Right cardiac atrium (tissue), 5 donors: ENCODE measurements at regions of chr4 and their contacts with region 1.

Region 1: DNA sequence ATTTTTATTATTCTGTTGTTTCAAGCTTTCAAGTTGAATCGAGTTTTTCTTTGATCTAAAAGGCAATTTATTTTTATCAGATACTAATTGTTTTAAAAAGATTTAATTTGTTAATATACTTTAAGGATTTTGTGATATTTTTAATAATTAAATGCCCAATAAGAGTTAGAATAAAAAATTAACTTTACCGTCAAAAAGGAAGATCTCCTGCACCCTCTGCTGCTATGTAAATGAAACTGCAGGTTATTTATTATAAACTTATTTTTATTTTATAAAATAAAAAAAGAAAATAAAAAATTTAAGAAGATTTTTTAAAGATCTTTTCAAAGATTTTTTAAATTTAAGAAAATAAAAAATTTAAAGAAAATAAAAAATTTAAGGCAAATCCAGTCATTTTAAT is 166.1 kb downstream of the CCSER1 start:
- DNase-seq: no peak
- ATAC-seq: no peak
- H3K4me3 ChIP-seq: no peak overlapping the region
- H3K27ac ChIP-seq: no peak overlapping the region
- H3K4me1 ChIP-seq: no peaks in the 10 kb centered on the region
- H3K27me3 ChIP-seq: no peaks in the 10 kb centered on the region

Region 2: DNA sequence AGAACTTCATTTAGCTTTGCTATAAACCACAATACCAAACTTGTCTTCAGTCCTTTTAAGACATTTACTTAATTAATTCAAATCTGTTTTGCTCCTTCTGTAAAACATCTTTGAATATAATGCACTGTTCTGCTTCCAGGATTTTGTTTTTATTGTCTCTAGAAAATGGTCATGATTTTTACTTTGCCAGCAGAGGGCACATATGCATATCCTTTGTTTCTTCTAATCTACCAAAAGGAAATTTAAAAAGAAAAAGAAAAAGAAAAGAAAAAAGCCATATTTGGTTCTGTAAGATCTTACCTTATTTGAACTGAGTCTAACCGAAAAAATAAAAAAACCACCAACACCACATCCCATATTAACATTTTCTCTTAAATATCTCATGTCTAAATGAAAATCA is 268.1 kb before region 1 on chr4:
- intact Hi-C with region 1: loop called in 1 of 4 experiments (anchors 10 kb)
- DNase-seq: no peak
- ATAC-seq: no peak
- H3K4me3 ChIP-seq: no peak overlapping the region
- H3K27ac ChIP-seq: no peak overlapping the region
- H3K4me1 ChIP-seq: no peaks in the 10 kb centered on the region
- H3K27me3 ChIP-seq: no peaks in the 10 kb centered on the region

Region 3: GRCh38 chr4:90120037-90120436 is 173.3 kb before region 1 on chr4:
- intact Hi-C with region 1: loop called in 2 of 4 experiments (anchors 5 to 10 kb)
- DNase-seq: no peak
- ATAC-seq: peak in 1 of 2 donors; percentile 46
- H3K4me3 ChIP-seq: no peak overlapping the region
- H3K27ac ChIP-seq: no peak overlapping the region
- H3K4me1 ChIP-seq: no peaks in the 10 kb centered on the region
- H3K27me3 ChIP-seq: no peaks in the 10 kb centered on the region